ENCODE measurements at regions of chr3 and their contacts with region 1.

Region 1: DNA sequence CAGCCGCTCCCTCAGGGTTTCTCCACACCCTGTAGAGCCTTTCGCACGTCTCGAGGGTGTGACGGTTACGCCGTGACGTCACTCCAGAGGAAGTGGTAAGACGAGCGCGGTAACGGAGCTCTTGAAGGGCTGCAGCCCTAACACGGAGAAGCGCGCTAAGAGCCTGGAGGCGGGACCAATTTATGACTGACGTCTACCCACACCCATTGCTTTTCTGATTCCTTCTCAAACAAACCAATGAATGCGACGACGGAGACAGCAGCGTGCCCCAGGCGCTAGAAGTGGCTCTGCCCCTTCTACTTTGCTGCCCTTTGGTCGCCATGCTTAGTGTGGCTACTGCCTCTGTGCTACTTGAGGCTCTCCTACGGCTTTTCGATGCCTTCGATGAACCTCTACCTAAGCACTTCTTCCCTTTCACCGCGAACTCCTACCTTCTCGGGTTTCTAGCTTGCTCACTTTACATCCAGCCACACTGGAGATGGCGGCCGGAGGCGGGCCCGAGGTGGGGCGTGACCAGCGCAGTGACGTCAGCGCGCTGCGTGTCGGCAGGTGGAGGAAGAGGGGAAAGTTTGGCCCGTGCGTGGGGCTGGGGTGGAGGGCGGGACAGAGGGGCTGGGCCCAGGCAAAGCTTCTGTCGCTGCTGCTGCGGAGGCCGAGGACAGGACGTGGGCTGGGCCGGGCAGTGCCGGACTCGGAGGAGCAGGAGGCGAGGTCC is at the start of gene OXSR1:
- DNase-seq: peak; percentile 96
- H3K4me3 Mint-ChIP-seq: peak within 1 kb of the TSS; percentile 98
- H3K27ac Mint-ChIP-seq: peak within 1 kb of the TSS; percentile 100
- H3K4me1 Mint-ChIP-seq: peaks cover 43% of the 10 kb centered on the region
- H3K27me3 Mint-ChIP-seq: no peaks in the 10 kb centered on the region
- total RNA-seq, gene OXSR1: 48.6 and 50.8 TPM in 2 replicates

Region 2: DNA sequence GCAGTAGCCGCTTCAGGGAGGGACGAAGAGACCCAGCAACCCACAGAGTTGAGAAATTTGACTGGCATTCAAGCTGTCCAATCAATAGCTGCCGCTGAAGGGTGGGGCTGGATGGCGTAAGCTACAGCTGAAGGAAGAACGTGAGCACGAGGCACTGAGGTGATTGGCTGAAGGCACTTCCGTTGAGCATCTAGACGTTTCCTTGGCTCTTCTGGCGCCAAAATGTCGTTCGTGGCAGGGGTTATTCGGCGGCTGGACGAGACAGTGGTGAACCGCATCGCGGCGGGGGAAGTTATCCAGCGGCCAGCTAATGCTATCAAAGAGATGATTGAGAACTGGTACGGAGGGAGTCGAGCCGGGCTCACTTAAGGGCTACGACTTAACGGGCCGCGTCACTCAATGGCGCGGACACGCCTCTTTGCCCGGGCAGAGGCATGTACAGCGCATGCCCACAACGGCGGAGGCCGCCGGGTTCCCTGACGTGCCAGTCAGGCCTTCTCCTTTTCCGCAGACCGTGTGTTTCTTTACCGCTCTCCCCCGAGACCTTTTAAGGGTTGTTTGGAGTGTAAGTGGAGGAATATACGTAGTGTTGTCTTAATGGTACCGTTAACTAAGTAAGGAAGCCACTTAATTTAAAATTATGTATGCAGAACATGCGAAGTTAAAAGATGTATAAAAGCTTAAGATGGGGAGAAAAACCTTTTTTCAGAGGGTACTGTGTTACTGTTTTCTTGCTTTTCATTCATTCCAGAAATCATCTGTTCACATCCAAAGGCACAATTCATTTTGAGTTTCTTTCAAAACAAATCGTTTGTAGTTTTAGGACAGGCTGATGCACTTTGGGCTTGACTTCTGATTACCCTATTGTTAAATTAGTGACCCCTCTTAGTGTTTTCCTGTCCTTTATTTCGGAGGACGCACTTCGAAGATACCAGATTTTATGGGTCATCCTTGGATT is 1171.5 kb before region 1 on chr3 and contains the start of gene MLH1:
- intact Hi-C with region 1: loop called (anchors 1 kb)
- DNase-seq: peak; percentile 99
- H3K4me3 Mint-ChIP-seq: no peak within 1 kb of the TSS
- H3K27ac Mint-ChIP-seq: no peak within 1 kb of the TSS
- H3K4me1 Mint-ChIP-seq: peaks cover 38% of the 10 kb centered on the region
- H3K27me3 Mint-ChIP-seq: no peaks in the 10 kb centered on the region
- total RNA-seq, gene MLH1: 63.4 and 65.0 TPM in 2 replicates

Region 3: GRCh38 chr3:38154033-38154494 is 11.1 kb before region 1 on chr3:
- intact Hi-C with region 1: loop called (anchors 1 kb)
- DNase-seq: no peak
- H3K4me3 Mint-ChIP-seq: no peak overlapping the region
- H3K27ac Mint-ChIP-seq: no peak overlapping the region
- H3K4me1 Mint-ChIP-seq: peaks cover 54% of the 10 kb centered on the region
- H3K27me3 Mint-ChIP-seq: no peaks in the 10 kb centered on the region

Region 4: DNA sequence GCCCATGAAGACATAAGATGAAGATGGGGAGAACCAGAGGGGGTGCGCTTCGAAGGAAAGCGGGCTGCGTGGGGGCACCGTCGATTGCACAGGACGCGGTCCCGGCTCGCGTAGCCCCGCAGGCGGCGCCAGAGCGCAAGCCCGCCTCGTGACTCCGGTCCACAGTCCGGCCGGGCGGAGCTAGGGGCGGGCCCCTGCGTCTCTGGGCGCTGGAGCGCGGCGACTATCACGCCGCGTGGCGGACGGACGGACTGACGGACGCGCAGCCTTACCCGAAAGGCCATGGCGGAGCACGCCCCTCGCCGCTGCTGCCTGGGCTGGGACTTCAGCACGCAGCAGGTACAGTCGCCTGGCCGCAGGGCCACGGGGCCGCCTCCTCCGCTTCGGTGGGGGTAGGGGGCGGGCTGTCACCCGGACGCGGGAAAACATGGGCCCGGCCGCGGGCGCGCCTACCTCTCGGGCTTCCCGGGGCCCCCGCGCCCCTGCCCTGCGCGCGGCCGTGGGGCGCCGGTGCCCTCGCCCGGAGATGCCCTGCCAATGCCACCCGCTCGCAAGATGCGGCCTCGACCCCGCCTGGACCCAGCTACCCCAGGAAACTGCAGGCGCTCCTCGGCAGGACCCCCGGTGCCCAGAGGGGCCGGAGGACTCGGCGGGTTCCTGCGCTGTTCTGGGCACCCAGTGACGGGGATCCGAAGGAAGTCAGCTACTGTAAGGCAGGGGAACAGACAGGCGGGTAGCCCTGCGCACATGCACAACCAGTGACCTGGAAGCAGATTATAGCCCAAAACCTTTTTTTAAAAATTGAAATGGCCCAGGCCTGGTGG is 181.7 kb after region 1 on chr3 and contains the start of gene XYLB:
- intact Hi-C with region 1: loop called (anchors 1 kb)
- DNase-seq: peak; percentile 76
- H3K4me3 Mint-ChIP-seq: peak within 1 kb of the TSS; percentile 85
- H3K27ac Mint-ChIP-seq: no peak within 1 kb of the TSS
- H3K4me1 Mint-ChIP-seq: peaks cover 8% of the 10 kb centered on the region
- H3K27me3 Mint-ChIP-seq: peaks cover 8% of the 10 kb centered on the region
- total RNA-seq, gene XYLB: 7.1 and 9.9 TPM in 2 replicates

Region 5: GRCh38 chr3:38548159-38548931 is 383.2 kb after region 1 on chr3:
- intact Hi-C with region 1: no loop called
- DNase-seq: no peak
- H3K4me3 Mint-ChIP-seq: no peak overlapping the region
- H3K27ac Mint-ChIP-seq: no peak overlapping the region
- H3K4me1 Mint-ChIP-seq: no peaks in the 10 kb centered on the region
- H3K27me3 Mint-ChIP-seq: peaks cover 8% of the 10 kb centered on the region

Region 6: GRCh38 chr3:39383045-39383880 is 1218.1 kb after region 1 on chr3 and contains the start of gene SLC25A38:
- intact Hi-C with region 1: loop called (anchors 10 kb)
- DNase-seq: peak; percentile 74
- H3K4me3 Mint-ChIP-seq: peak within 1 kb of the TSS; percentile 94
- H3K27ac Mint-ChIP-seq: peak within 1 kb of the TSS; percentile 97
- H3K4me1 Mint-ChIP-seq: peaks cover 34% of the 10 kb centered on the region
- H3K27me3 Mint-ChIP-seq: no peaks in the 10 kb centered on the region
- total RNA-seq, gene SLC25A38: 40.0 and 43.1 TPM in 2 replicates

Measured in activated T-helper 1 cell treated with anti-CD3 and anti-CD28 coated beads, Interleukin-12 subunit alpha, Interleukin-12 subunit beta, Interleukin-2, Interleukin-4 antibody, amounts not matched to agents 30 ng/mL and 10 ng/mL and 1 ng/mL, durations not matched to agents 14 hours and 24 hours and 36 hours (primary cell).